Activated CD4-positive, alpha-beta T cell treated with anti-CD3 and anti-CD28 coated beads for 36 hours (primary cell): ENCODE measurements at regions of chr1 and their contacts with region 1.

Region 1: DNA sequence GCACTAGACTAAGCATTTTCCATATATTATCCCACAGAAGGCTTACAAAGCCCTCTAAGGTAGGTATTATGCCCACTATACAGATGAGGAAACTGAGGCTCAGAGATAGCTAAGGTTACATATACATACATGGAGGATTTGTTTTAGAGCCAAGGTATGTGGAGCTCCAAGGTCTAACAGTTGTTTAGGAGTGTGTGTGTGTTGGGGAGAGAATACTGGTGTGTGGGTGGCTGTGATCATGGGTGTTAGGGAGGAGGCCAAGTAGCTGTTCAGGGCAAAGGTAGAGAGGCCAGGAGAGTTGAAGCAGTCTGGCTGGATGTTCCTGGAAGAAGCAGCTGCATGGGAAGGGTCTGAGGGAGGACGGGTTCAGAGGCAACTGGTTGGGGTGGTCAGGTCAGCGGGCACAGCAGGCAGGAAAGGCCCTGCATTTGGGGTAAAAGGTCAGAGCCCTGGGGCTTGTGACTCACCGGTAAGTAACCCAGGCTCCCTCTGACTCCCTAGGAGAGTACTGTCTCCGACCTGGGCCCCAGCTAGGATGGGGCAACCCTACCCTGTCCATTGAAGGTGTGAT is 5.1 kb upstream of the LDLRAP1 start:
- DNase-seq: no peak
- ATAC-seq: no peak
- H3K4me3 Mint-ChIP-seq: no peak overlapping the region
- H3K27ac Mint-ChIP-seq: no peak overlapping the region
- H3K4me1 Mint-ChIP-seq: peaks cover 3% of the 10 kb centered on the region
- H3K27me3 Mint-ChIP-seq: no peaks in the 10 kb centered on the region

Region 2: GRCh38 chr1:25430666-25431505 is 107.4 kb before region 1 on chr1 and contains the start of gene MACO1:
- CTCF ChIA-PET with region 1: no interaction called
- POLR2A ChIA-PET with region 1: no interaction called
- intact Hi-C with region 1: no loop called
- DNase-seq: peak; percentile 98
- ATAC-seq: peak; percentile 93
- H3K4me3 Mint-ChIP-seq: peak within 1 kb of the TSS; percentile 93
- H3K27ac Mint-ChIP-seq: peak within 1 kb of the TSS; percentile 99
- H3K4me1 Mint-ChIP-seq: peaks cover 47% of the 10 kb centered on the region
- H3K27me3 Mint-ChIP-seq: no peaks in the 10 kb centered on the region
- total RNA-seq, gene MACO1: 15.7 to 18.5 TPM

Region 3: DNA sequence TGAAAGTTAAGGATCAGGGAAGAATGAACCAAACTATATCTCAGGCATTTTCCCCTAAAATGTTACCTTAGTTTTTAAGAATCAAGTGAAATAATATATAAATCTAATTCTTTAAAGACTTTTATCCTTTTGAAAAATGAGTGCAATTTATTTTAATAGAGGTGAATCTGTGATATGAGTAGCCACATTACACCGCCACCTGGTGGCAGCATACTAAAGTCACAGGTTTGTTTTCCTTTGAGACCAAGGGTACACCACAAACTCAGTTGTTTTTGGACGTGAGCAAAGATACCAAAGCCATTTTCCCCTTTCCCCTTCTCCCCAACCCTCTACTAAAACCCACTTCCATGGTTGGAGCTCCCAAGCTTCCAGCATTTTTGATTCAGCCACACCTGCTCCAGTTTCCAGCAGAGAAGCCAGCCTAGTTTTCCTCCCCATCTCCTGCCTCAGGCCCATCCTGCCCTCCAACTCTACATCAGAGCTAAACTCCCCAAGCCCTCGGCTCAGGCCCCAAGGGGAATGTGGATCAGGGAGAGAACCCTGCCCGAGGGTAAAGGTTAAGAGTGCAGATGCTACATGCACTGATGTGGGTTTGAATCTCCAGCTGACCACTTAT is 17.7 kb before region 1 on chr1:
- CTCF ChIA-PET with region 1: interaction called, 12 read pairs
- POLR2A ChIA-PET with region 1: no interaction called
- intact Hi-C with region 1: no loop called
- DNase-seq: peak; percentile 86
- ATAC-seq: peak; percentile 68
- H3K4me3 Mint-ChIP-seq: no peak overlapping the region
- H3K27ac Mint-ChIP-seq: no peak overlapping the region
- H3K4me1 Mint-ChIP-seq: peaks cover 4% of the 10 kb centered on the region
- H3K27me3 Mint-ChIP-seq: no peaks in the 10 kb centered on the region

Region 4: GRCh38 chr1:25715888-25716287 is 177.6 kb after region 1 on chr1:
- CTCF ChIA-PET with region 1: no interaction called
- POLR2A ChIA-PET with region 1: no interaction called
- intact Hi-C with region 1: no loop called
- DNase-seq: no peak
- ATAC-seq: no peak
- H3K4me3 Mint-ChIP-seq: no peak overlapping the region
- H3K27ac Mint-ChIP-seq: peak overlapping the region; percentile 39
- H3K4me1 Mint-ChIP-seq: peaks cover 59% of the 10 kb centered on the region
- H3K27me3 Mint-ChIP-seq: no peaks in the 10 kb centered on the region